ENCODE measurements at regions of chr3 and their contacts with region 1.

Region 1: GRCh38 chr3:190566043-190566933 is 52.4 kb downstream of the IL1RAP start:
- DNase-seq: peak; percentile 98
- H3K4me3 Mint-ChIP-seq: peak overlapping the region; percentile 7
- H3K27ac Mint-ChIP-seq: peak overlapping the region; percentile 84
- H3K4me1 Mint-ChIP-seq: peaks cover 62% of the 10 kb centered on the region
- H3K27me3 Mint-ChIP-seq: no peaks in the 10 kb centered on the region
- CTCF ChIP-seq: no peak

Region 2: GRCh38 chr3:190369701-190370296 is 196.5 kb before region 1 on chr3:
- CTCF ChIA-PET with region 1: no interaction called
- intact Hi-C with region 1: loop called (anchors 5 kb)
- DNase-seq: no peak
- H3K4me3 Mint-ChIP-seq: no peak overlapping the region
- H3K27ac Mint-ChIP-seq: peak overlapping the region; percentile 76
- H3K4me1 Mint-ChIP-seq: peaks cover 91% of the 10 kb centered on the region
- H3K27me3 Mint-ChIP-seq: no peaks in the 10 kb centered on the region
- CTCF ChIP-seq: no peak

Region 3: DNA sequence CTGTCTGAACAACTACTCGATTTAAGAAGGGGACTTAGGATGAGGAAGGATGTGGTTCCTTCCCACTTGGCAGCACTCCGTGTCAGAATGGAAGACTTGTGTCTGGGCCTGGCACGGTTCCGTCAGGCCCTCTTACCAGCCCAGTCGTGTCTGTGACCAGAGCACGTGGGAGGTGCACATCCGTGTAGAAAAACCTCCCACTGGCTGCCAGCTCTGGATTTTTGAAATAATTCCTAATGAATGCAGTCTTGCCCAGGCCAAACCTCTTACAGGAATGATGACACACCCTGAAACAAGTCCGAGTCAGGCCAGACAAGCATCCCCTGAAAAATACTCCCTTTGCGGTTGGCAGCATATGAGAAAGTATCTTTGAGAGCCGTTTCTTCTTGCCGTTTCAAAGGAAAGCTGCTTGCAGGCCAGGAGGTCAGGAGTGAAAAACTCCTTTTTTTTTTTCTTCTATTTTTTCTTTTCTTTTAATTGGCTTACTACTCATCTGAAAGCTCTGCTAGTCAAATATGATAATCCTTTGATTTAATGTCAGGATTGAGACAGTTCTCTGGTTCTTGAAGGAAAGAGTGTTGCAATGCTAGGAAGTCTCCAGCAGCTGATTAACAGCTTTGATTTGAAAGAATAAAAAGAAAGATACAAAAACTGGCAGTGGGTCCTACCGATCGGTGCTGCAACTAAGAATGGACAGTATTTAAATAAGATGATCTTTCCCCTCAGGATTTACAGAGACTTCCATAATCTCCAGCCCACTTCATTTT is 32.6 kb before region 1 on chr3:
- CTCF ChIA-PET with region 1: interaction called, 5 read pairs
- intact Hi-C with region 1: loop called (anchors 2 kb)
- DNase-seq: peak; percentile 75
- H3K4me3 Mint-ChIP-seq: peak overlapping the region; percentile 37
- H3K27ac Mint-ChIP-seq: peak overlapping the region; percentile 95
- H3K4me1 Mint-ChIP-seq: peaks cover 87% of the 10 kb centered on the region
- H3K27me3 Mint-ChIP-seq: no peaks in the 10 kb centered on the region
- CTCF ChIP-seq: no peak

Region 4: GRCh38 chr3:190585805-190586630 is 19.7 kb after region 1 on chr3:
- CTCF ChIA-PET with region 1: interaction called, 6 read pairs
- intact Hi-C with region 1: loop called (anchors 2 kb)
- DNase-seq: peak; percentile 83
- H3K4me3 Mint-ChIP-seq: peak overlapping the region; percentile 52
- H3K27ac Mint-ChIP-seq: peak overlapping the region; percentile 90
- H3K4me1 Mint-ChIP-seq: peaks cover 76% of the 10 kb centered on the region
- H3K27me3 Mint-ChIP-seq: no peaks in the 10 kb centered on the region
- CTCF ChIP-seq: no peak

Region 5: DNA sequence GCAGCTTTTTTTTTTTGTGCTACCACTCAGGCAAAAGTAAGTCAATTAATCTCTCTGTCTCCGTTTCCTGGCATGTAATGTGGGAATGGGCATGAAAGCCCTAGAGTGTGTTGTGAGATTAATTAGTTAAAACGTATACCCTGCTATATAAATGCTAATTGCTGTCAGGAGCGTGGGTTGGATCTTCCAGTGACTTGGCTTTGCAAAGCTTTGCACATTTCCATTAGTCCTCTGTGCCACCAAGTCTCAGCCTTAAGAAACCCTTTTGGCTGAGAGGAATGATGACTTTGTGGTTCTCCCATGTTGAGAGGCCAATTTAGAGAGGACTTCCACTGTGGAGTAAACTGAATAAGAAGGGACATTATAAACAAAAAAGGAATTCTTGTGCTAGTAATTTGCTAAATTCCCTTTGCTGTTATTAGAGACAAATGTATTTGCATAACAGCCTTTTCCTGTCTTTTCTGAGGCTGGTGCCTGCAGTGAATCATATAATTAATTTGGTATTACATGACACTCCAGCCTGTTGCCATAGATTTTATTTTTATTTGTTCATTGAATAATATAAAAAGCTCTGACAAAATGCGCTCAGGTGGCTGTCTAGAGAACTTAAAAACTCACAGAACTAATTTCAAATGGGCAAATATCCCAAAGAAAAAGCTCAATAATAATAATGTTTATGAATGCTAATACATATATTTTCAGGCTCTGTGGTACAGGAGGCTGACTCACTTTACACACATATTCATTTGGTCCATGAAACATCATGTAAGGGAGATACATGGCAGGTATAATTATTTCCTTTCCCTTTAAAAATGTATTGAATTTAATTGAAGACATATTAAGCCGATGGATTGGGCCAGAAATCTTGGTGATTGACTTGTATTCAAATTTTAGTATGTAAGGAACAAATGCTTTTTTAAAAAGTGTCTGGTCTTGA is 30.3 kb after region 1 on chr3:
- CTCF ChIA-PET with region 1: interaction called, 5 read pairs
- intact Hi-C with region 1: loop called (anchors 1 kb)
- DNase-seq: no peak
- H3K4me3 Mint-ChIP-seq: peak overlapping the region; percentile 42
- H3K27ac Mint-ChIP-seq: peak overlapping the region; percentile 87
- H3K4me1 Mint-ChIP-seq: peaks cover 71% of the 10 kb centered on the region
- H3K27me3 Mint-ChIP-seq: no peaks in the 10 kb centered on the region
- CTCF ChIP-seq: no peak